ENCODE measurements at regions of chr12 and their contacts with region 1.

Region 1: GRCh38 chr12:93550748-93551611 is 21.5 kb upstream of the SOCS2 start:
- DNase-seq: no peak
- H3K4me3 ChIP-seq: no peak overlapping the region
- H3K27ac ChIP-seq: no peak overlapping the region
- H3K4me1 ChIP-seq: no peaks in the 10 kb centered on the region
- H3K27me3 ChIP-seq: no peaks in the 10 kb centered on the region
- CTCF ChIP-seq: no peak

Region 2: GRCh38 chr12:93634416-93634815 is 83.4 kb after region 1 on chr12:
- CTCF ChIA-PET with region 1: no interaction called
- POLR2A ChIA-PET with region 1: no interaction called
- intact Hi-C with region 1: no loop called
- DNase-seq: no peak
- H3K4me3 ChIP-seq: no peak overlapping the region
- H3K27ac ChIP-seq: no peak overlapping the region
- H3K4me1 ChIP-seq: no peaks in the 10 kb centered on the region
- H3K27me3 ChIP-seq: no peaks in the 10 kb centered on the region
- CTCF ChIP-seq: no peak

Region 3: GRCh38 chr12:93896427-93896826 is 345.4 kb after region 1 on chr12:
- CTCF ChIA-PET with region 1: no interaction called
- POLR2A ChIA-PET with region 1: interaction called, 14 read pairs
- intact Hi-C with region 1: no loop called
- DNase-seq: no peak
- H3K4me3 ChIP-seq: no peak overlapping the region
- H3K27ac ChIP-seq: no peak overlapping the region
- H3K4me1 ChIP-seq: 0 out of 2 replicates have a peak, but pooled peaks cover 4% of the 10 kb centered on the region
- H3K27me3 ChIP-seq: no peaks in the 10 kb centered on the region
- CTCF ChIP-seq: no peak; the same call in 1 of the 2 replicates